Activated CD4-positive, alpha-beta T cell treated with anti-CD3 and anti-CD28 coated beads for 36 hours (primary cell): ENCODE measurements at regions of chr1 and their contacts with region 1.

Region 1: DNA sequence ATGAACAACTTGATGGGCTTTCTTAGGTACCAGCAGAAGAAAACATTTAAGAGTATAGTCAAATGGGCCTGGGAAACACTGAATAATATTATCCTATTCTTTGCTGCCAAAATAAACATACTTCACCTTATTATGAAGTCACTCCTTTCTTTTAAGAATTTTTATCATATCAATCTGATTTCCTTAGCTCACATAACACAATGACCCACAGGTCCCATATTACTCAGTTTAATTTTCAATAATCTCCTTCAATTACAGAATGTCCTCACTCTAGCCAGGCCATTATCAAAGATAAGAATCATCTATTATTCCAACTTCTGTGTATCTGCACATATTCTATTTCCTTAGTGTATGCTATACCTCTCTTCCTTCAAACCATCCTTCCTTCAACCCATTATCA is 63.0 kb downstream of the PIGK start:
- DNase-seq: no peak
- ATAC-seq: no peak
- H3K4me3 Mint-ChIP-seq: no peak overlapping the region
- H3K27ac Mint-ChIP-seq: no peak overlapping the region
- H3K4me1 Mint-ChIP-seq: peaks cover 7% of the 10 kb centered on the region
- H3K27me3 Mint-ChIP-seq: no peaks in the 10 kb centered on the region

Region 2: DNA sequence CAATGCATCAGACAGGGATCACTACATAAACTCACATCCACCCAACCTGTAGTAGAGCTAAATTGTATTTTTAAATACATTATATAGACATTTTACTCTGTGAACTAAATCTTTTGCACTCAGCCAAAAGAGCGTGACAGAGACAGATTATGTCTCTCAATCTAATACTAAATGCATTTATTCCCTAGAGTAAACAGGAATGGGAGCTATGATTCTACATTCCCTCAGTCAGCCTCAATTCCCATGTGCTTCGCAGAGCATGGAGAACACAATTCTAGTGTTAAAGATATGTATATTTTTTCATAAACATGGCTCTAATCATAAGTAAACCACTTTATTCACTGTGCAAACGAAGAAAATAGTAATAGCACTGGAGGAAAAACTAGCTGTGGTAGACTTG is 46.5 kb after region 1 on chr1:
- CTCF ChIA-PET with region 1: no interaction called
- POLR2A ChIA-PET with region 1: no interaction called
- intact Hi-C with region 1: no loop called
- DNase-seq: no peak
- ATAC-seq: no peak
- H3K4me3 Mint-ChIP-seq: no peak overlapping the region
- H3K27ac Mint-ChIP-seq: no peak overlapping the region
- H3K4me1 Mint-ChIP-seq: peaks cover 6% of the 10 kb centered on the region
- H3K27me3 Mint-ChIP-seq: no peaks in the 10 kb centered on the region

Region 3: DNA sequence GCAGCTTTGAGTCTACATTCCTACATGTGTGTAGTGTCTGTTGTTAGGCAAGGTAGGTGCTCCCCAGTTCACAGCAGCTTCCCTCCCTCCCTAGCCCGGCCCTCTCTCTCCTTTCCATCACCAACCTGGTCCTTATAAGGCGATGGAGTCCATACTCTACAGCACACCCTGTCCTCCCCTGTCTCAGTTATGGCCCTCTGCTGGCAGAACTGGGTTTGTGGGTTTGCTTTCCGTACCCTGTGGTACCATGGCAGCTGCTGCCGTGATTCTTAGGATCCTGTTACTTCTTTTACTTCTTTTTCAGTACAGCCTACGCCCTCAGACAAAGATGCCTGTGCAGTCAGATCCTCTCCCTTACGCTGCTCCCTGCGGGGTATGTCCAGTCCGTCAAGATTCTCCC is 157.3 kb after region 1 on chr1:
- CTCF ChIA-PET with region 1: no interaction called
- POLR2A ChIA-PET with region 1: no interaction called
- intact Hi-C with region 1: loop called in 1 of 2 experiments (anchors 10 kb)
- DNase-seq: peak; percentile 47
- ATAC-seq: peak; percentile 74
- H3K4me3 Mint-ChIP-seq: no peak overlapping the region
- H3K27ac Mint-ChIP-seq: no peak overlapping the region
- H3K4me1 Mint-ChIP-seq: peaks cover 40% of the 10 kb centered on the region
- H3K27me3 Mint-ChIP-seq: no peaks in the 10 kb centered on the region